Mammary epithelial cell (primary cell): ENCODE measurements at regions of chr5 and their contacts with region 1.

Region 1: GRCh38 chr5:73938280-73938937 is 312.4 kb downstream of the ARHGEF28 start:
- DNase-seq: peak; percentile 89
- H3K4me3 ChIP-seq: peak overlapping the region in 2 of 3 experiments; percentile 2 to 6
- H3K27ac ChIP-seq: peak overlapping the region; percentile 90
- H3K4me1 ChIP-seq: peaks cover 42% of the 10 kb centered on the region
- H3K27me3 ChIP-seq: no peaks in the 10 kb centered on the region
- CTCF ChIP-seq: no peak

Region 2: GRCh38 chr5:73558950-73559349 is 379.5 kb before region 1 on chr5:
- CTCF ChIA-PET with region 1: no interaction called
- dilution Hi-C with region 1: no loop called
- in situ Hi-C with region 1: no loop called
- intact Hi-C with region 1: no loop called
- DNase-seq: no peak
- H3K4me3 ChIP-seq: no peak overlapping the region
- H3K27ac ChIP-seq: no peak overlapping the region
- H3K4me1 ChIP-seq: peaks cover 3% of the 10 kb centered on the region
- H3K27me3 ChIP-seq: no peaks in the 10 kb centered on the region
- CTCF ChIP-seq: no peak

Region 3: DNA sequence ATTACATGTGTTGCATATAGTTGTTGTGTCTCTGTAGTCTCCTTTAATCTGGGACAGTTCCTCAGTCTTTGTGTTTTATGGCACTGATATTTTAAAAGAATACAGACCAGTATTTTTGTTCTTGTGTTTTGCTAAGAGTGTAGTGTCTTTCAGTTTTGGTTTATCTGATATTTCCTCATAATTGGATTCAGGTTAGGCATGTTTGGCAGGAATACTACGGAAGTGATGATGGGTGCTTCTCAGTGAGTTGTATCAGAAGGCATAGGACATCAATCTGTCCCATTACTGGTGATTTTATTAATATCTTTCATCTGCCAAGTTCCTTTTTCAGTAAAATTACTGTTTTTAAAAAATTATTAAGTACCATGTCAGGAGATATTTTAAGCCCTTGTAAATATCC is 99.5 kb before region 1 on chr5:
- CTCF ChIA-PET with region 1: no interaction called
- dilution Hi-C with region 1: no loop called
- in situ Hi-C with region 1: no loop called
- intact Hi-C with region 1: no loop called
- DNase-seq: no peak
- H3K4me3 ChIP-seq: no peak overlapping the region
- H3K27ac ChIP-seq: no peak overlapping the region
- H3K4me1 ChIP-seq: peaks cover 6% of the 10 kb centered on the region
- H3K27me3 ChIP-seq: no peaks in the 10 kb centered on the region
- CTCF ChIP-seq: no peak

Region 4: GRCh38 chr5:73957397-73958001 is 19.1 kb after region 1 on chr5:
- CTCF ChIA-PET with region 1: no interaction called
- dilution Hi-C with region 1: no loop called
- in situ Hi-C with region 1: no loop called
- intact Hi-C with region 1: loop called (anchors 2 kb)
- DNase-seq: peak; percentile 93
- H3K4me3 ChIP-seq: no peak overlapping the region
- H3K27ac ChIP-seq: peak overlapping the region; percentile 59
- H3K4me1 ChIP-seq: peaks cover 24% of the 10 kb centered on the region
- H3K27me3 ChIP-seq: no peaks in the 10 kb centered on the region
- CTCF ChIP-seq: no peak